Activated CD4-positive, alpha-beta T cell treated with anti-CD3 and anti-CD28 coated beads for 36 hours (primary cell): ENCODE measurements at regions of chr4 and their contacts with region 1.

Region 1: DNA sequence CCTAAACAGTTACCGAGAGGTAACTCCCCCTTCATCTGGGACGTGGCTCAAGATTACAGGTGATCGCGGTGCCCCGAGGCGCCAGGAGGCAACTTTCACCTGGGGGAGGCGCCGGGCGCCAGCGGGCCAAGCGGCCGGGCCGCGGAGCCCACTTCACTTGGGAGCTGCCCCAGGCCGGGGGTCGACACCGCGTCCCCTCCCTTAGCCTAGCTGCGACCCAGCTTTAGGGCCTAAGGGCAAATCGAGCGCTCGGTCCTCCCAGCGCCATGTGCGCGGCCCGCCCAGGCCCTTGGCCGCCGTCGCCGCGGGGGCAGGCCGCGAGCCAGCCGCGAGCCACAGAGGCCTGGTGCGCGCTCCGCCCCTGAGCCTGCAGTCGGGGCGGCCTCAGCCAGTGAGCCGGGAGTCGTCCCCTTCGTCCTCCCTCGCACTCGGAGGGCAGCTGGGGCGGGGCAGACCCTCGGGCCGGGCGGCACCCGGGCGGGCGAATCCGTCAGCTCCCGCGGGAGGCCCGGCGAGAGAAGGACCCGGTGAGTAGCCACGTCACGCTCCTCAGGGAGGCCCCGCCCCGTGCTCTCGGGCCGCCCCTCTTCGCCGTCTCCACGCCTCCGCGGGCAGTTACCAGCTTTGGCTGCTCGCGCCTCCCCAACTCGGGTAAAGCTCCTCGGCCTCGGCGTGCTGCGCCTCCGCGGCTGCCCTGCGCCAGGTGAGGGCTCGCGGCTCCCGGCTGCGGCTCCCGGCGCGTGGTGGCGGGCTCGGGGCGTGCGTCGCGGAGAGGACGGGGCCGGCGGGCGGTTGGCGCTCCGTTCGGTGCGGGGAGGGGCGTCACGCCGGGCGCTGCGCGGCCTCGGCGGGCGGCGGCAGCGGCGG is at the start of gene LARP1B:
- DNase-seq: peak; percentile 96
- ATAC-seq: peak; percentile 92
- H3K4me3 Mint-ChIP-seq: peak within 1 kb of the TSS; percentile 81
- H3K27ac Mint-ChIP-seq: peak within 1 kb of the TSS; percentile 93
- H3K4me1 Mint-ChIP-seq: peaks cover 14% of the 10 kb centered on the region
- H3K27me3 Mint-ChIP-seq: no peaks in the 10 kb centered on the region
- total RNA-seq, gene LARP1B: 22.1 to 26.0 TPM

Region 2: DNA sequence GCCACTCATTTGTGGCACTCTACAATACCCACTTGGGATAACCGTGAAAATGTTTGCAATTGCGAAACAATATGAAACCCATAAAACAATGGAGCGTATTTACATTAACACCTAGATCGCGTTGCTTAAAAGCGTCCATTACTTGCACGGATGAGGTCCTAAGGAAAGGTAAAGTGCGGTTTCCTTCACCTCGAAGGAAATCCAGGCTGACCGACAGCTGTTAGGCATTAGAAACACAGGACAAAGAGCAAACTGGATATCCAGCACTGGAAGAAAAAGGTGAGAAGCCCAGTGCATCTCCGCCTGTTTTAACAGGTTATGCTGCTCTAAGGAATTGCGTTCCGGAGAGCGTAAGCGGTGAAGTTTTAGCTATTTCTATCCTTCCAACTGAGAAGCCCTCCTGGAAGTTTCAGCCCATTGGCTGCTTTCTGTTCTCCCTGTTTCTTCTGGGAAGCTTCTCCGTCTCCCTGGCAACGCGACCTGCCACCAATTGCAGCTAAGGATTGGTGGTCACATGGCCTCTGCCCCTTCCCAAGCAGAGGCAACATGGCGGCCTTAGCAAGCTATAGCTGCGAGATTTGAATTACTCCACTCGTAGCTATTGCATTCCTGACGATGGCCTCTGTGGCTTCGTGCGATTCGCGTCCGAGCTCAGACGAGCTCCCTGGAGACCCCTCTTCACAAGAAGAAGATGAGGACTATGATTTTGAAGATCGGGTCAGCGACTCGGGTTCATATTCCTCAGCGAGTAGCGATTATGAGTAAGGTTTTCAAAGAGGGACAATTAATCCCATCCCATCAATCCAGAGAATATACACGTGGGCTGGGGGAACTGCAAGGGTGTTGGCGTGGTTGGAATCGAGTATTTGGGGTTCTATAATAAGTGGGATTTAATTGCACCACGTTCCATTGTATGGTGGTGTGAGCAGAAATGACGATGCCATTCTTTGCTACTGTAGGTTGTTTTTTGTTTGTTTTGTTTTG is 428.2 kb before region 1 on chr4 and contains the start of gene INTU:
- CTCF ChIA-PET with region 1: no interaction called
- POLR2A ChIA-PET with region 1: no interaction called
- intact Hi-C with region 1: loop called in 1 of 2 experiments (anchors 5 kb)
- DNase-seq: peak; percentile 72
- ATAC-seq: peak; percentile 99
- H3K4me3 Mint-ChIP-seq: peak within 1 kb of the TSS; percentile 75
- H3K27ac Mint-ChIP-seq: peak within 1 kb of the TSS; percentile 27
- H3K4me1 Mint-ChIP-seq: peaks cover 9% of the 10 kb centered on the region
- H3K27me3 Mint-ChIP-seq: peaks cover 37% of the 10 kb centered on the region
- total RNA-seq, gene INTU: 0.50 to 0.56 TPM

Region 3: GRCh38 chr4:127880764-127881562 is 180.0 kb before region 1 on chr4 and contains the start of gene PLK4:
- CTCF ChIA-PET with region 1: no interaction called
- POLR2A ChIA-PET with region 1: interaction called, 8 read pairs
- intact Hi-C with region 1: loop called (anchors 1 kb)
- DNase-seq: peak; percentile 97
- ATAC-seq: peak; percentile 97
- H3K4me3 Mint-ChIP-seq: peak within 1 kb of the TSS; percentile 97
- H3K27ac Mint-ChIP-seq: peak within 1 kb of the TSS; percentile 98
- H3K4me1 Mint-ChIP-seq: peaks cover 24% of the 10 kb centered on the region
- H3K27me3 Mint-ChIP-seq: no peaks in the 10 kb centered on the region
- total RNA-seq, gene PLK4: 44.4 to 52.3 TPM

Region 4: GRCh38 chr4:127997534-127998388 is 63.2 kb before region 1 on chr4:
- CTCF ChIA-PET with region 1: no interaction called
- POLR2A ChIA-PET with region 1: interaction called, 3 read pairs
- intact Hi-C with region 1: loop called in 1 of 2 experiments (anchors 2 kb)
- DNase-seq: peak; percentile 62
- ATAC-seq: peak; percentile 99
- H3K4me3 Mint-ChIP-seq: no peak overlapping the region
- H3K27ac Mint-ChIP-seq: peak overlapping the region; percentile 59
- H3K4me1 Mint-ChIP-seq: peaks cover 27% of the 10 kb centered on the region
- H3K27me3 Mint-ChIP-seq: no peaks in the 10 kb centered on the region

Region 5: GRCh38 chr4:128550060-128550459 is 489.1 kb after region 1 on chr4:
- CTCF ChIA-PET with region 1: no interaction called
- POLR2A ChIA-PET with region 1: no interaction called
- intact Hi-C with region 1: no loop called
- DNase-seq: no peak
- ATAC-seq: no peak
- H3K4me3 Mint-ChIP-seq: no peak overlapping the region
- H3K27ac Mint-ChIP-seq: no peak overlapping the region
- H3K4me1 Mint-ChIP-seq: peaks cover 13% of the 10 kb centered on the region
- H3K27me3 Mint-ChIP-seq: peaks cover 8% of the 10 kb centered on the region

Region 6: DNA sequence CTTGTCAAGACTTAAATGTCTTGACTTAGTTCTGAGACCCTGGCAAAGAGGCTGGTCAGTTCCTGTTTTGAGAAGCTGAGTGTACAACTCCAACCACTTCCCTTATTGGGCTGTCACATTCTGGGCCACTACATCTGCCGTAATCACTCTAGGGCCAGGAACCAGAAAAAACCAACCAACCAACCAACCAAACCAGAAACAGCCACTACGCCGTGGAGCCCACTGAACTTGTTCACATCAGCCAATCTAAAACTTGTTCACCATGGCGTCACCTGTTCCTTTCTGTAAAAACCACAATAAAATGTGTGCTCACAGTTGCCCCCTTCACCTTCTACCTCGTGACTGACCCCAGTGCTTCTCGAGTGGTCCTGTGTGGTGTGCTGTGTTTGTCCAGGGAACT is 855.9 kb after region 1 on chr4:
- CTCF ChIA-PET with region 1: no interaction called
- POLR2A ChIA-PET with region 1: no interaction called
- intact Hi-C with region 1: no loop called
- DNase-seq: no peak
- ATAC-seq: no peak
- H3K4me3 Mint-ChIP-seq: no peak overlapping the region
- H3K27ac Mint-ChIP-seq: no peak overlapping the region
- H3K4me1 Mint-ChIP-seq: peaks cover 14% of the 10 kb centered on the region
- H3K27me3 Mint-ChIP-seq: no peaks in the 10 kb centered on the region

Region 7: GRCh38 chr4:129093191-129093920 is 1032.4 kb after region 1 on chr4 and contains the start of gene SCLT1:
- CTCF ChIA-PET with region 1: no interaction called
- POLR2A ChIA-PET with region 1: no interaction called
- intact Hi-C with region 1: loop called in 1 of 2 experiments (anchors 2 kb)
- DNase-seq: peak; percentile 98
- ATAC-seq: peak; percentile 94
- H3K4me3 Mint-ChIP-seq: no peak within 1 kb of the TSS
- H3K27ac Mint-ChIP-seq: peak within 1 kb of the TSS; percentile 35
- H3K4me1 Mint-ChIP-seq: peaks cover 27% of the 10 kb centered on the region
- H3K27me3 Mint-ChIP-seq: no peaks in the 10 kb centered on the region
- total RNA-seq, gene SCLT1: 18.7 to 19.3 TPM